GM10248 (cell line): ENCODE measurements at regions of chr11 and their contacts with region 1.

Region 1: DNA sequence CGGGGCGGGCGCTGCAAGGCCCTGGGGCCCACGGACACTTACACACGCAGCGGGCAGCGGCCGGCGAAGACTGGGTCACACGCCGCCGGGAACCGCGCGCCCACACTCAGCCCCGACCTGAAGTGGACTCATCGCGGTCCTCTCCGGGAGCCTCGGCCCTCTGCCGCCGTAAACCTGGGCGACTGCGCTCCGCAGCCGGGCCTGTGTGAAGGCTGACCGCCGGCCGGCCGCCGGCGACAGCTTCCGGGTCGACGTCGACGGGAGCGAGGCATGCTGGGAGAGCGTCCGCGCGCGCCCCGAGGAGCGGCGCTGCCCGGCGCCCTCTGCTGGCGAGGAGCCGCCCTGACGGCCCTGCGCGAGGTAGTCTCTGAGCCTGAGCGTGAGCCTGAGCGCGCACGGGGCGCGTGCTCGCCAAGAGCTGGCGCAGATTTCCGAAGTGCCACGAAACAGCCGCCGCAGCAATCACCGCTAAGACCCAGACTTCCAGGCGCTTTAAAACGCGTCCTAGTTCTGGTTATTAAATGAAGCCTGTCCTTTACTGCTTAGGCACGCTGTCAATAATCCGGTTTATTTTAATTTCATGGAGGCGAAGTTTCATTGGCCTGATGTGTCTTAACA is at the start of gene SNX19:
- DNase-seq: peak; percentile 95
- CTCF ChIP-seq: peak; percentile 95

Region 2: DNA sequence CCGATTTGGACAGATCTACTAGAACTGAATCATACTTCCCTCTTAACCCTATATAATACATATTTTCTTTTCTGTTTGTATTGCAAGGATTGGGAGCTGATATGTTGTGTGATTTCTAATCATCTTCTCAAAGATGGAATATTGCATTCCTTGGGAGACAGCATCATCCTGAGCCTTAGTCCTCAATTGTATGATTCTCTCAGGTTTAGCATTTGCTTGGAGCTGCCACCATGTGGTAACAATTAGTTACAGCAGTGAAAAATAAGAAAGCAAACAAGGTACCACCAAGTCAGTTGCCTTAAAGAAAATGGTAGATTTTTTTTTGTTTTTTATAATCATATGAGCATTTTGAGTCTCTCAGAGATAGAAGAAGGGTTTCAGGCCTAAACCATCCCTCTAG is 12.0 kb before region 1 on chr11:
- CTCF ChIA-PET with region 1: interaction called, 70 read pairs
- POLR2A ChIA-PET with region 1: no interaction called
- DNase-seq: no peak
- CTCF ChIP-seq: peak; percentile 26